Common myeloid progenitor, CD34-positive (primary cell): ENCODE measurements at regions of chr5 and their contacts with region 1.

Region 1: DNA sequence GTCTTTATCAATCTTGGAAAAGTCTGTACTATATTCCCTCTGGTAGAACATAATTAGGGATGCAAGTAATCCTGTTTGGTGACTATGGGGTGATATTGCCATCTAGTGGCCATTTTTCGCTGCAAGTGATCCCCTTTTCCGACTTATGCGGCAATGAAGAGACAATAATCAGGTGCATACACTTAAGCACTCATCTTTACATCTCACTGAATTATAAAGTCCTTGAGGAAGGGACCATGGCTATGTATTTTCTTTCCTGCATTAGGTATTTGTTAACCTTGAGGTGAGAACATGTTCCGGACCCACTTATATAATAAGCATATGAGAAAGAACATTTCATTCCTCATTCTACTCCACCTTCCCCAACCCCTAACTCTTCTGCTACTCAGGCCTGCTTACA is 19.6 kb upstream of the LIX1 start:
- DNase-seq: peak; percentile 74 to 81 (median 75)
- H3K4me3 ChIP-seq: no peak overlapping the region
- H3K27ac ChIP-seq: no peak overlapping the region
- H3K4me1 ChIP-seq: no peaks in the 10 kb centered on the region
- H3K27me3 ChIP-seq: no peaks in the 10 kb centered on the region

Region 2: DNA sequence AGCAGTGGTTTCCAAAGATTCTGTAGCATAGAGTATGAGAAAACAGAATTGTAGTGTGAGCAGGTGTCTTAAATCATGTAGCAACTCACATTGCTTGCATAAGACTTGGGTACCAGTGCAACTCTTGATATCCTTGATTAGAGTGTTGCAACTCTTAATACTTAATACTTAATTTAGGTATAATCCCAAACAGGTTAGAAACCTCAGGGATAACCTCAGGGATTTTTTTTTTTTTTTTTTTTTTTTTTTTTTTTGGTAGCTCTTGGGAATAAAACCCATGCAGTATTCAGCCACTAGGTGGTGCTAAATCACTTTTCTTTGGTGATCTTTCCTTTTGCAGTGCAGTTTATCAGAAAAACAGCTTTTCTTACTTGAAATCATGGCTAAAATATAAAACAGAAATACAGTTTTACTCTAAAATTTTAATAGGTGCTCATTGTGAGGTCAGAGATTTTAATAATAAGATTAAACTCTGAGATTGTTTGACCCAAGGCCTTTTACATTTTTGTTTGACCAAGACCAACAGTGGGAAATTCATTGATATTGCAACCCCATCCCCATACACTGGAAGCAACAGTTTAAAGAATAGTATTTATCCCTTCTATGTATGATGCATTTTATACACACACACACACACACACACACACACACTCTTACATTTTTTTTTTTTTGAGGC is 409.6 kb before region 1 on chr5:
- CTCF ChIA-PET with region 1: interaction called, 51 read pairs
- POLR2A ChIA-PET with region 1: interaction called, 4 read pairs
- DNase-seq: peak; percentile 67 to 87 (median 74)
- H3K4me3 ChIP-seq: no peak overlapping the region
- H3K27ac ChIP-seq: no peak overlapping the region
- H3K4me1 ChIP-seq: no peaks in the 10 kb centered on the region
- H3K27me3 ChIP-seq: no peaks in the 10 kb centered on the region

Region 3: GRCh38 chr5:96868603-96869371 is 293.3 kb before region 1 on chr5:
- CTCF ChIA-PET with region 1: interaction called, 45 read pairs
- POLR2A ChIA-PET with region 1: interaction called, 4 read pairs
- DNase-seq: peak; percentile 64 to 81 (median 80)
- H3K4me3 ChIP-seq: no peak overlapping the region
- H3K27ac ChIP-seq: no peak overlapping the region
- H3K4me1 ChIP-seq: no peaks in the 10 kb centered on the region
- H3K27me3 ChIP-seq: no peaks in the 10 kb centered on the region

Region 4: DNA sequence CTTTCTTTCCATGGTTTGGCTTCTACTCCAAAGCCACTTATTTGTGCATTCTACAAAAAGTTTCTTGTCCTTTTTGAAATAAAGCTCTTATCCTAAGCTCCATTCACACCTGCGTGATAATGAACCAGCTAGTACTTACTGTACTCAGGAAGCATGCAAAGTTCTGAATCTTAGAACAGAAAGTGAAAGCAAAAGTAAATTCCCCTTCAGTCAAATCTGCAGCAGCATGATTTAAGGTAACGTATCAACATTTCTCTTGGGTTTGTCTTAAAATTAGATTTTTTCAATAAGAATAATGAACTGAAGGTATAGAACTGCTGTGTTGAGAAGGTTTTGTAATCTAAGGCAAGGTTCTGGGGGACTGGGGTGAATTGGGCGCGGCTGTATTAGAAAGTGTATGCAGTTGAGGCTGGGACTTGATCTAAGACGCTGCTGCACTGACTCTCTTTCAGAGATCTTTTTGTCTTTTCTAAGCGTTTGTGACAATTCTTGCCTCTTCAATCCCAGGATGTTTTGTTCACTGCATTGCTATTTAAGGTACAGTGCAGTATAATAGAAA is 285.7 kb before region 1 on chr5 and contains the start of gene ERAP2:
- CTCF ChIA-PET with region 1: interaction called, 12 read pairs
- POLR2A ChIA-PET with region 1: no interaction called
- DNase-seq: peak; percentile 56 to 84 (median 74)
- H3K4me3 ChIP-seq: peak within 1 kb of the TSS; percentile 3 to 100 (median 89)
- H3K27ac ChIP-seq: peak within 1 kb of the TSS; percentile 55 to 89
- H3K4me1 ChIP-seq: peaks cover 16 to 34% (median 24%) of the 10 kb centered on the region in 4 experiments
- H3K27me3 ChIP-seq: no peaks in the 10 kb centered on the region

Region 5: GRCh38 chr5:97142521-97143254 is 19.4 kb before region 1 on chr5 and contains the start of gene LIX1:
- CTCF ChIA-PET with region 1: interaction called, 20 read pairs
- POLR2A ChIA-PET with region 1: no interaction called
- DNase-seq: peak; percentile 40 to 63 (median 53)
- H3K4me3 ChIP-seq: no peak within 1 kb of the TSS
- H3K27ac ChIP-seq: no peak within 1 kb of the TSS
- H3K4me1 ChIP-seq: no peaks in the 10 kb centered on the region
- H3K27me3 ChIP-seq: no peaks in the 10 kb centered on the region

Region 6: DNA sequence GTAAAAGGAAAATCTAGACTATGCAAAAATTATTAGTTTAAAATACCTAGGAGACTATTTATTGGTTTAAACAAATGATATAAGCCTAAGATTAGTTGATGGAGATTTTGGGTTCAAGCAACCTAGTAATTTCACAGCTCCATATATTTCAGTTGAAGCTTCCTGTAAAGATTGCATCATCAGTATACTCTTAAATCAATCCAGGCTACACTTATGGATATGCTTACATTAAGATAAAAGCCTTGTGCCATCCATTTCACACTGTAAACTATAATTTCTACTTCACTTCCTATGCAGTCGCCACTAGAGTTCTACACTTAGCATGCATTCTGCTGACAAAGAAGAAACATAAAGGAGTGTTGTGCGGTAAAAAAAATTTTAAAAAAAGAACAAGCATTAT is 12.3 kb before region 1 on chr5:
- CTCF ChIA-PET with region 1: interaction called, 13 read pairs
- POLR2A ChIA-PET with region 1: no interaction called
- DNase-seq: no peak
- H3K4me3 ChIP-seq: no peak overlapping the region
- H3K27ac ChIP-seq: no peak overlapping the region
- H3K4me1 ChIP-seq: no peaks in the 10 kb centered on the region
- H3K27me3 ChIP-seq: no peaks in the 10 kb centered on the region